Vagina (tissue), 2 donors: ENCODE measurements at regions of chr9 and their contacts with region 1.

Region 1: GRCh38 chr9:78725503-78725902 is 428.6 kb downstream of the PSAT1 start:
- DNase-seq: no peak
- H3K4me3 ChIP-seq: no peak overlapping the region
- H3K27ac ChIP-seq: no peak overlapping the region
- H3K4me1 ChIP-seq: no peaks in the 10 kb centered on the region
- H3K27me3 ChIP-seq: no peaks in the 10 kb centered on the region
- CTCF ChIP-seq: no peak
- POLR2A ChIP-seq: no peak

Region 2: DNA sequence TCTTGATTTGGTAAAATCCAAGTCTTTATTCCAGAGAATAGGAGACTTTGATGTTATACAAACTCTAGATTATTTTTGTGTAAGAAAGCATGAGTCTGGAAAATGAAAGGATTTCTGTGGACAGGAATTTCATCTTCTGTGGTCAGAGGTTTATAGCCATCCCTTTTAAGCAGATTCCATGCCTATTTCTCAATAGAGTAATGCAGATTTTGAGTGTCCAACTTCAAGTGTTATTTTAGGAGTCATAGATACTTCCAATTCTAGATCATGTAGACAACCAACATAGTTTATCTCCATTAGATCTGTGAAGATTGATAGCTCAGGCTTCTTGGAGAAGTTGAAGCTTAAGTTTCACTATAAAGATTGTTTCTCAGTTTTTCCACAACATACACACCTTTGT is 48.9 kb before region 1 on chr9:
- intact Hi-C with region 1: loop called (anchors 10 kb)
- DNase-seq: no peak
- H3K4me3 ChIP-seq: no peak overlapping the region
- H3K27ac ChIP-seq: no peak overlapping the region
- H3K4me1 ChIP-seq: no peaks in the 10 kb centered on the region
- H3K27me3 ChIP-seq: no peaks in the 10 kb centered on the region
- CTCF ChIP-seq: no peak
- POLR2A ChIP-seq: no peak